Naive thymus-derived CD4-positive, alpha-beta T cell (primary cell): ENCODE measurements at regions of chr19 and their contacts with region 1.

Region 1: DNA sequence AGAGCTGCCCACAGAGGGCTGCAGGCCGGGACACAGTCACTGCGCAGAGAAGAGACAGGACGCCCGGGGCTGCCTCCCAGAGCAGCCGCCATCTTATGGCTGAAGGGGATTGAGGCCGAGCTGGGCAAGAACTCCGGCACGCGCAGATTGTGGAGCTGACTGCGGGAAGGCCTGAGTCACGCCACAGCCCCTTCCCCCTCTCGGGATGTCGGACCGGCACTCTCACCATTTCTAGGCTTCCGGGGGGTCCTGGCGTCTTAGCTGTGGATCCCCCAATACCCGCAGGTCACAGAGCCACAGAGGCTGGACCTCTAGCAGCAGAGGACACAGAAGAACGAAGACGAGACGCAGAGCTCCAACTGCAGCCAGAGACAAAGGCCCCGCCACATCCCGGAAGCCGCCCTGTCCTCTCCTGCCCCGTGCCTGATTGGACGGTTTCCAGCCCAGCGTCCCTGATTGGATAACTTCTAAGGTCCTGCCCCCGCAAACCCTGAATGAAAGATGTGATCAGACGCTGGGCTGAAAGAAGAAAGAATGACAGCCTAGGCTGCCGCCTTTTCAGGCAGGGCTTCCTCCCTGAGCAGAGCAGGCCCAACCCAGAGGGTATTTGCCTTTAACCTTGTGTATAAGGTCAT is at the start of gene ZNF43:
- DNase-seq: peak; percentile 76 to 96 (median 93)
- ATAC-seq: peak; percentile 99
- H3K4me3 ChIP-seq: peak within 1 kb of the TSS; percentile 97
- H3K4me3 Mint-ChIP-seq: peak within 1 kb of the TSS; percentile 93 to 99 (median 98)
- H3K27ac ChIP-seq: peak within 1 kb of the TSS; percentile 88
- H3K27ac Mint-ChIP-seq: peak within 1 kb of the TSS; percentile 96 to 99 (median 98)
- H3K4me1 ChIP-seq: peaks cover 5 to 9% of the 10 kb centered on the region in 2 donors
- H3K4me1 Mint-ChIP-seq: peaks cover 3 to 48% (median 35%) of the 10 kb centered on the region in 7 donors
- H3K27me3 ChIP-seq: no peaks in the 10 kb centered on the region
- H3K27me3 Mint-ChIP-seq: no peaks in the 10 kb centered on the region
- total RNA-seq, gene ZNF43: 20.5 to 39.3 (median 36.2) TPM

Region 2: DNA sequence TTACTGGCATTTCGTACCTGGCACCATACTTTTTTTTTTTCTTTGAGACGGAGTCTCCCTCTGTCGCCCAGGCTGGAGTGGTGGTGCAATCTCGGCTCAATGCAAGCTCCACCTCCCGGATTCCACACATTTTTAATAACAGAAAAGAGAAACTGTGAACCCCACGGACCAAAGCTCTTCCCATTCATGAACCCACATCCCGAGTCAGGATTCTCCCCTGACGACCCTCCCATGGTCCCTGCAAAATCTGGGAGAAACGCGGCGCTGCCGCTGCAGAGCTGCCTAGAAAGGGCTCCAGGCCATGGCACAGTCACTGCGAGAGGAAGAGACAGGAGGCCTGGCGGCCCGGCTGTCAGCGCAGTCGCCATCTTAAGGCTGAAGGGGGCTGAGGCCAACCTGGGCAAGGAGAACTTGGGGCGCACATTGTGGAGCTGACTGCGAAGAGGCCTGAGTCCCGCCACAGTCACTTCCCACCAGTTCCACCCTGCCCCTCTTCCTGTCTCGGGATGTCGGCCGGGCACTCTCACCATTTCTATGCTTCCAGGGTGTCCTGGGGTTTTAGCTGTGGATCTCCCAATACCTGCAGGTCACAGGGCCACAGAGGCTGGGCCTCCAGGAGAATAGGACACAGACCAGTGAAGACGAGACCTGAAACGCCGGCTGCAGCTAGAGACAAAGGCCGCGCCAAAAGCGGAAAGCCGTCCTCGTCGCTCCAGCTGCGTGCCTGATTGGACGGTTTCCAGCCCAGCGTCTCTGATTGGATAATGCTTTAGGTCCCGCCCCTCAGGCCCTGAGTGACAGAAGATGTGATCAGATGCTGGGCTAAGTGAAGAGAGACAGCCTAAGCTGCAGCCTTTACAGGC is 1597.9 kb before region 1 on chr19:
- CTCF ChIA-PET with region 1: no interaction called
- POLR2A ChIA-PET with region 1: no interaction called
- intact Hi-C with region 1: loop called in 1 of 2 experiments (anchors 5 kb)
- DNase-seq: peak; percentile 70 to 90 (median 83)
- ATAC-seq: peak; percentile 97
- H3K4me3 ChIP-seq: peak overlapping the region; percentile 71
- H3K4me3 Mint-ChIP-seq: peak overlapping the region; percentile 83 to 98 (median 96)
- H3K27ac ChIP-seq: peak overlapping the region; percentile 63
- H3K27ac Mint-ChIP-seq: peak overlapping the region; percentile 55 to 95 (median 87)
- H3K4me1 ChIP-seq: peaks cover 0 to 4% of the 10 kb centered on the region in 2 donors
- H3K4me1 Mint-ChIP-seq: peaks cover 5 to 12% (median 10%) of the 10 kb centered on the region in 7 donors
- H3K27me3 ChIP-seq: no peaks in the 10 kb centered on the region
- H3K27me3 Mint-ChIP-seq: no peaks in the 10 kb centered on the region

Region 3: DNA sequence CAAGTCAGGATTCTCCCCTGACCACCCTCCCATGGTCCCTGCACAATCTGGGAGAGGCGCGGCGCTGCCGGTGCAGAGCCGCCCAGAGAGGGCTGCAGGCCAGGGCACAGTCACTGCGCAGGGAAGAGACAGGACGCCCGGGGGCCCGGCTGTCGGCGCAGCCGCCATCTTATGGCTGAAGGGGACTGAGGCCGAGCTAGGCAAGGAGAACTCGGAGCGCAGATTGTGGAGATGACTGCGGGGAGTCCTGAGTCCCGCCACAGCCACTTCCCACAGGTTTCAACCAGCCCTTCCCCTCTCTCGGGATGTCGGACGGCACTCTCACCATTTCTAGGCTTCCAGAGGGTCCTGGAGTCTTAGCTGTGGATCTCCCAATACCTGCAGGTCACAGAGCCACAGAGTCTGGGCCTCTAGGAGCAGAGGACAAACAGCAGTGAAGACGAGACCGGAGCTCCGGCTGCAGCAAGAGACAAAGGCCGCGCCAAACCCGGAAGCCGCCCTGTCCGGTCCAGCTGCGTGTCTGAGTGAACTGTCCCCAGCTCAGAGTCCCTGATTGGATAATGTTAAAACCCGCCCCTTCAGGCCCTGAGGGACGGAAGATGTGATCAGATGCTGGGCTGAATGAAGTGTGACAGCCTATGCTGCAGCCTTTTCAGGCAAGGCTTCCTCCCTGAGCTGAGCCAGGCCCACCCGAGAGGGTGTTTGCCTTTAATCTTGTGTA is 506.9 kb before region 1 on chr19 and contains the start of gene ZNF708:
- CTCF ChIA-PET with region 1: no interaction called
- POLR2A ChIA-PET with region 1: interaction called, 10 read pairs
- intact Hi-C with region 1: no loop called
- DNase-seq: peak; percentile 42 to 80 (median 71)
- ATAC-seq: peak; percentile 99
- H3K4me3 ChIP-seq: peak within 1 kb of the TSS; percentile 94
- H3K4me3 Mint-ChIP-seq: peak within 1 kb of the TSS; percentile 93 to 99 (median 97)
- H3K27ac ChIP-seq: peak within 1 kb of the TSS; percentile 92
- H3K27ac Mint-ChIP-seq: peak within 1 kb of the TSS; percentile 96 to 100 (median 99)
- H3K4me1 ChIP-seq: peaks cover 6 to 14% of the 10 kb centered on the region in 2 donors
- H3K4me1 Mint-ChIP-seq: peaks cover 24 to 47% (median 31%) of the 10 kb centered on the region in 7 donors
- H3K27me3 ChIP-seq: no peaks in the 10 kb centered on the region
- H3K27me3 Mint-ChIP-seq: no peaks in the 10 kb centered on the region
- total RNA-seq, gene ZNF708: 21.2 to 48.0 (median 24.2) TPM

Region 4: DNA sequence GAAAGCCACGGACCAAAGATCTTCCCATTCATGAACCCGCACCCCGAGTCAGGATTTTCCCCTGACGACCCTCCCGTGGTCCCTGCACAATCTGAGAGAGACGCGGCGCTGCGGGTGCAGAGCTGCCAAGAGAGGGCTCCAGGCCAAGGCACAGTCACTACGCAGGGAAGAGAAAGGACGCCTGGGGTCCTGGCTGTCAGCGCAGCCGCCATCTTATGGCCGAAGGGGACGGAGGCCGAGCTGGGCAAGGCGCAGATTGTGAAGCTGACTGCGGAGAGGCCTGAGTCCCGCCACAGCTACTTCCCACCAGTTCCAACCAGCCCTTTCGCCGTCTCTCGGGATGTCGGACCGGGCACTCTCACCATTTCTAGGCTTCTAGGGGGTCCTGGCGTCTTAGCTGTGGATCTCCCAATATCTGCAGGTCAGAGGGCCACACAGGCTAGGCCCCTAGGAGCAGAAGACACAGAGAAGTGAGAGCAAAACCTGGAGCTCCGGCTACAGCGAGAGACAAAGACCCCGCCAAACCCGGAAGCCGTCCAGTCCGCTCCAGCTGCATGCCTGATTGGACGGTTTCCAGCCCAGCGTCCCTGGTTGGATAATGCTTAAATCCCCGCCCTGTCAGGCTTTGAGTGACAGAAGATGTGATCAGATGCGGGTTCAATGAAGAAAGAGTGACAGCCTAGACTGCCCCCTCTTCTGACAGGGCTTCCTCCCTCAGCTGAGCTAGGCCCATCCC is 68.7 kb before region 1 on chr19 and contains the start of gene ZNF100:
- CTCF ChIA-PET with region 1: no interaction called
- POLR2A ChIA-PET with region 1: interaction called, 38 read pairs
- intact Hi-C with region 1: loop called (anchors 1 to 2 kb)
- DNase-seq: peak; percentile 64 to 88 (median 80)
- ATAC-seq: peak; percentile 98
- H3K4me3 ChIP-seq: peak within 1 kb of the TSS; percentile 97
- H3K4me3 Mint-ChIP-seq: peak within 1 kb of the TSS; percentile 92 to 98 (median 97)
- H3K27ac ChIP-seq: peak within 1 kb of the TSS; percentile 81
- H3K27ac Mint-ChIP-seq: peak within 1 kb of the TSS; percentile 89 to 98 (median 92)
- H3K4me1 ChIP-seq: no peaks in the 10 kb centered on the region
- H3K4me1 Mint-ChIP-seq: peaks cover 7 to 43% (median 27%) of the 10 kb centered on the region in 7 donors
- H3K27me3 ChIP-seq: no peaks in the 10 kb centered on the region
- H3K27me3 Mint-ChIP-seq: no peaks in the 10 kb centered on the region
- total RNA-seq, gene ZNF100: 9.5 to 22.5 (median 18.4) TPM

Region 5: GRCh38 chr19:23249911-23250649 is 1414.2 kb after region 1 on chr19 and contains the start of gene ZNF724:
- CTCF ChIA-PET with region 1: no interaction called
- POLR2A ChIA-PET with region 1: no interaction called
- intact Hi-C with region 1: loop called in 1 of 2 experiments (anchors 1 kb)
- DNase-seq: peak; percentile 66 to 91 (median 88)
- ATAC-seq: peak; percentile 100
- H3K4me3 ChIP-seq: peak within 1 kb of the TSS; percentile 84
- H3K4me3 Mint-ChIP-seq: peak within 1 kb of the TSS; percentile 95 to 99 (median 96)
- H3K27ac ChIP-seq: peak within 1 kb of the TSS; percentile 72
- H3K27ac Mint-ChIP-seq: peak within 1 kb of the TSS; percentile 61 to 96 (median 89)
- H3K4me1 ChIP-seq: peaks cover 0 to 6% of the 10 kb centered on the region in 2 donors
- H3K4me1 Mint-ChIP-seq: peaks cover 6 to 22% (median 10%) of the 10 kb centered on the region in 7 donors
- H3K27me3 ChIP-seq: no peaks in the 10 kb centered on the region
- H3K27me3 Mint-ChIP-seq: no peaks in the 10 kb centered on the region
- total RNA-seq, gene ZNF724: 2.9 to 11.3 (median 6.8) TPM